ENCODE measurements at regions of chr1 and their contacts with region 1.

Region 1: DNA sequence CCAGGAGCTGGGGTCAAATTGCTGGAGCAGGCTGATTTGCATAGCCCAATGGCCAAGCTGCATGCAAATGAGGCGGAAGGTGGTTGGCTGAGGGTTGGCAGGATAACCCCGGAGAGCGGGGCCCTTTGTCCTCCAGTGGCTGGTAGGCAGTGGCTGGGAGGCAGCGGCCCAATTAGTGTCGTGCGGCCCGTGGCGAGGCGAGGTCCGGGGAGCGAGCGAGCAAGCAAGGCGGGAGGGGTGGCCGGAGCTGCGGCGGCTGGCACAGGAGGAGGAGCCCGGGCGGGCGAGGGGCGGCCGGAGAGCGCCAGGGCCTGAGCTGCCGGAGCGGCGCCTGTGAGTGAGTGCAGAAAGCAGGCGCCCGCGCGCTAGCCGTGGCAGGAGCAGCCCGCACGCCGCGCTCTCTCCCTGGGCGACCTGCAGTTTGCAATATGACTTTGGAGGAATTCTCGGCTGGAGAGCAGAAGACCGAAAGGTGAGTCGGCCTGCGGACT is at the start of gene GADD45A:
- DNase-seq: peak; percentile 99
- ATAC-seq: peak; percentile 74
- H3K4me3 ChIP-seq: peak within 1 kb of the TSS; percentile 87
- H3K27ac ChIP-seq: peak within 1 kb of the TSS; percentile 93
- H3K4me1 ChIP-seq: peaks cover 53% of the 10 kb centered on the region
- H3K27me3 ChIP-seq: no peaks in the 10 kb centered on the region
- CTCF ChIP-seq: no peak
- total RNA-seq, gene GADD45A: 129 and 153 TPM in 2 replicates

Region 2: DNA sequence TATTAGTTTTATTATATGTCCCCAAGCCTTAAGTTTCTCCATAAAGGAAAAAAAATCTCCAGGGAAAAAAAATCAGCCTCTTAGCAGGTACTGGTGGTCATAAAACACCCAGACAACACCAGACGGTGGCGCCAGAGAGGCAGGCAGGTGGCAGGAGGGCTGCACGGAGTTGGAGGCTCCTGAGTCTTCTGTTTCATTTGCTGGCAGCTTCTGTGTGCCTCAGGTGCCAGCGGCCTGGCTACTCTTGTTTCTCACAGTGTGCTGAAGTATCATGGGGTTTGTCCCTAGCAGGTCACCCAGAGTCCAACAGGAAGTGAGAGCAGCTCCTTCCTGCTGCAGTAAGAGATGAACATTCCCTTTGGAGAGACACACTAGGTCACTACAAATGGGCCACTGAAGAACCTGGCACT is 123.4 kb before region 1 on chr1:
- CTCF ChIA-PET with region 1: interaction called, 4 read pairs
- POLR2A ChIA-PET with region 1: interaction called, 20 read pairs
- intact Hi-C with region 1: loop called (anchors 1 kb)
- DNase-seq: peak; percentile 92
- ATAC-seq: peak; percentile 90
- H3K4me3 ChIP-seq: no peak overlapping the region
- H3K27ac ChIP-seq: 0 out of 2 replicates have a peak overlapping the region, but pooled peaks have one; percentile 7
- H3K4me1 ChIP-seq: peaks cover 18% of the 10 kb centered on the region
- H3K27me3 ChIP-seq: no peaks in the 10 kb centered on the region
- CTCF ChIP-seq: peak; percentile 93

Region 3: GRCh38 chr1:67618285-67619018 is 66.7 kb before region 1 on chr1:
- CTCF ChIA-PET with region 1: no interaction called
- POLR2A ChIA-PET with region 1: interaction called, 5 read pairs
- intact Hi-C with region 1: loop called (anchors 2 kb)
- DNase-seq: peak; percentile 66
- ATAC-seq: peak; percentile 95
- H3K4me3 ChIP-seq: peak overlapping the region; percentile 44
- H3K27ac ChIP-seq: no peak overlapping the region
- H3K4me1 ChIP-seq: peaks cover 26% of the 10 kb centered on the region
- H3K27me3 ChIP-seq: no peaks in the 10 kb centered on the region
- CTCF ChIP-seq: no peak

Region 4: DNA sequence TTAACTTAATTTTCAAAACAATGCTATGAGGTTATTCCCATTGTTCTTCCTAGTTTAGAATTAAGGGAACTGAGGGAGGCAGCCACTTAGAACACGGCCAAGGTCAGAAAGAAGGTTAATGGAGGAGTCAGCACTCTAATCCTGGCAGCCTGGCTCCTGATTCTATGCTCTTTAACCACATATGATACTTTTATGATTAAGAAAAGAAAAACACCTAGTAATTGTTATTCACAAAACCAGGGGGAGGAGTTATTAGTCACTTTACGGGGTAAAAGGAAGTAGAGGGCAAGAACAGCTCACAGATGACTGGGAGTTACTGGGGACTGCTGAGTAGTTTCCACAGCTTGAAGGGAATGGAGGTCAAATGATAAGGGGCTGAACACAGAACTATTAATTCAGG is 38.5 kb after region 1 on chr1:
- CTCF ChIA-PET with region 1: no interaction called
- POLR2A ChIA-PET with region 1: interaction called, 6 read pairs
- intact Hi-C with region 1: loop called (anchors 1 kb)
- DNase-seq: peak; percentile 85
- ATAC-seq: peak; percentile 81
- H3K4me3 ChIP-seq: no peak overlapping the region
- H3K27ac ChIP-seq: peak overlapping the region; percentile 82
- H3K4me1 ChIP-seq: peaks cover 53% of the 10 kb centered on the region
- H3K27me3 ChIP-seq: no peaks in the 10 kb centered on the region
- CTCF ChIP-seq: no peak

Region 5: DNA sequence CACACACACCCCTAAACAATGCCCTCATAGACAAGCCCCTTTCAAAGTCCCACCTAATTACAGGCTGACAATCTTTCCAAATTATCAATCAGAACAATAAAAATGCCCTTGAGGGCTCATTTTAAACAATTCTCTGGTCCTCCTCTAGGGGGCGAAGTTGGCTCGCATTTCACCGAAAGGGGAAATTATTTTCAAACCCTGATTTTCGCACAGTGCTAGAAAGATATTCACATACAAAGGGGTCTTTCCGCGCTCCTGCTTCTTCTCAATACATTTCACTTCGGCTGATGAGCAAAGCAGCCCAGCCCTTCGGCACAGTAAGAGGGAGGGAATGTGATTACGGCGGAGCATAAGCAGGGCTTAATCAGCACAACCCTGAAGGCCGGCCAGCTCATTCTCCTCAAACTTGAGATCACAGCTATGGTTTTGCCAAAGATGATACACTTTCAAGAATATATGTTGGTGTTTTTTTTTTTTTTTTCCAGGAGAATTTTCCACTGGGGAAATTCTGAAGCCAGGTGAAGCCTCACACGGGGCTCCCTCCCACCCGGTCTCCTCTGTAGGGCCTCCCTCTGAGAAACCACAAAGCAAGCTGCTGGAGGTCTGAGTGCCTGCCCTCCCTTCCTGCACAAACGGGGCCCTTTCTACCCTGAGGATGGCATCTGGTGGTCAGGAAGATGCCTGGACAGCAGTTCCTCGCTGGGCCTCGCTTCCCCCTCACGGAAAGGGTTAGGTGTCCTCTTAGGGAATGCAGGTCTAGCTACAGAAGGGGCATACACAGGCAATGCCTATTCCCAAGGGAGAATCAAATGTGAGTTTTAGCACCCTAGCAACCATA is 81.2 kb after region 1 on chr1:
- CTCF ChIA-PET with region 1: interaction called, 10 read pairs
- POLR2A ChIA-PET with region 1: interaction called, 10 read pairs
- intact Hi-C with region 1: no loop called
- DNase-seq: peak; percentile 62
- ATAC-seq: peak; percentile 59
- H3K4me3 ChIP-seq: peak overlapping the region; percentile 54
- H3K27ac ChIP-seq: peak overlapping the region; percentile 33
- H3K4me1 ChIP-seq: peaks cover 34% of the 10 kb centered on the region
- H3K27me3 ChIP-seq: no peaks in the 10 kb centered on the region
- CTCF ChIP-seq: peak; percentile 92

Measured in PC-3 (cell line).